ENCODE measurements at regions of chr19 and their contacts with region 1.

Region 1: GRCh38 chr19:12610540-12611360 is at the starts of genes ZNF490 and ZNF791:
- DNase-seq: peak; percentile 88 to 99 (median 96)
- ATAC-seq: peak; percentile 85 to 95 (median 92)
- H3K4me3 ChIP-seq: peak within 1 kb of the TSS; percentile 98 to 100
- H3K4me3 Mint-ChIP-seq: peak within 1 kb of the TSS; percentile 99 to 100 (median 99)
- H3K27ac ChIP-seq: peak within 1 kb of the TSS; percentile 95
- H3K27ac Mint-ChIP-seq: peak within 1 kb of the TSS; percentile 98 to 99
- H3K4me1 ChIP-seq: peaks cover 20 to 56% of the 10 kb centered on the region in 2 experiments
- H3K4me1 Mint-ChIP-seq: peaks cover 43 to 50% (median 48%) of the 10 kb centered on the region in 3 donors
- H3K27me3 ChIP-seq: no peaks in the 10 kb centered on the region
- H3K27me3 Mint-ChIP-seq: no peaks in the 10 kb centered on the region
- total RNA-seq, gene ZNF490: 11.8 to 14.0 (median 12.4) TPM
- total RNA-seq, gene ZNF791: 33.4 to 54.6 (median 43.9) TPM

Region 2: GRCh38 chr19:12064590-12065538 is 545.9 kb before region 1 on chr19 and contains the start of gene ZNF844:
- CTCF ChIA-PET with region 1: interaction called in 1 of 2 experiments, 10 read pairs
- POLR2A ChIA-PET with region 1: no interaction called
- DNase-seq: peak; percentile 27 to 78 (median 60)
- ATAC-seq: peak; percentile 79 to 91 (median 88)
- H3K4me3 ChIP-seq: peak within 1 kb of the TSS; percentile 84 to 94
- H3K4me3 Mint-ChIP-seq: peak within 1 kb of the TSS; percentile 80 to 89 (median 83)
- H3K27ac ChIP-seq: peak within 1 kb of the TSS; percentile 81
- H3K27ac Mint-ChIP-seq: peak within 1 kb of the TSS; percentile 60 to 78
- H3K4me1 ChIP-seq: peaks cover 0 to 18% of the 10 kb centered on the region in 2 experiments
- H3K4me1 Mint-ChIP-seq: peaks cover 0 to 13% (median 11%) of the 10 kb centered on the region in 3 donors
- H3K27me3 ChIP-seq: no peaks in the 10 kb centered on the region
- H3K27me3 Mint-ChIP-seq: no peaks in the 10 kb centered on the region
- total RNA-seq, gene ZNF844: 9.2 to 20.7 (median 11.5) TPM

Region 3: DNA sequence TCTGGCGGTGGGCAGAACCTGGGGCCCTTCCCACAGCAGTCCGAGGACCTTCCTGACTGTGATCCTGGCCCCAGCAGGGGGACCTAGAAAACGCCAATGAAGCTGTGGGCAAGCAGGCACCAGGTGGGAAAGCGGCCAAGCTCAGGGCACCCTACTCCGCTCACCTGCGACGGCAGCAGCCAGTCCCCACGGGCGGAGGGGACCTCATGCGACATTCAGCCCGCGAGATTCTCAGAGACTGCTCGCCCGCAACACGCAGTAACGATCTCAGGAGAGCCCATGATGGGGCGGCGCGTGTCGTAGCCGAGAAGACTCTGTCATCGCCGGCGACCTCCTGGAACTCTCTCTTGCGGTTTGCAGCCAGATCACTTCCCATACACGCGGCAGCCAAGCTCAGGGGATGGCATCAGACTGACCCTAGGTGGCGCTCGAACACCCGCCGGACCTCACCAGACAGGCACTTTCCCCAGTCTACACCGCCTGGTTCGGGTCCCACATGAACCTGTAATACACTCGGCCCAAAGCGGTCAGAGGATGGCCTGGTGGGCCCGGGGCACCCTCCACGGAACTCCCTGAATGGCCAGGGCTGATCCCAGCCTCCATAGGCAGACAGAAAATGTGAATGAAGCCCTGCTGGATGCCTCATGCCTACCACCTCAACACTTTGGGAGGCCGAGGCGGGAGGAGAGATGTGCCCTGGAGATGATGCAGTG is 29.3 kb after region 1 on chr19:
- CTCF ChIA-PET with region 1: interaction called in 1 of 2 experiments, 11 read pairs
- POLR2A ChIA-PET with region 1: interaction called, 3 to 12 read pairs
- DNase-seq: peak; percentile 61 to 88 (median 74)
- ATAC-seq: peak; percentile 83 to 94 (median 90)
- H3K4me3 ChIP-seq: peak overlapping the region; percentile 19 to 26
- H3K4me3 Mint-ChIP-seq: peak overlapping the region; percentile 58 to 76 (median 75)
- H3K27ac ChIP-seq: no peak overlapping the region
- H3K27ac Mint-ChIP-seq: peak overlapping the region; percentile 44 to 71
- H3K4me1 ChIP-seq: peaks cover 2 to 21% of the 10 kb centered on the region in 2 experiments
- H3K4me1 Mint-ChIP-seq: peaks cover 22 to 23% (median 23%) of the 10 kb centered on the region in 3 donors
- H3K27me3 ChIP-seq: no peaks in the 10 kb centered on the region
- H3K27me3 Mint-ChIP-seq: no peaks in the 10 kb centered on the region

Measured in T-cell (primary cell).